Posterior vena cava (tissue), 2 donors: ENCODE measurements at regions of chr9 and their contacts with region 1.

Region 1: DNA sequence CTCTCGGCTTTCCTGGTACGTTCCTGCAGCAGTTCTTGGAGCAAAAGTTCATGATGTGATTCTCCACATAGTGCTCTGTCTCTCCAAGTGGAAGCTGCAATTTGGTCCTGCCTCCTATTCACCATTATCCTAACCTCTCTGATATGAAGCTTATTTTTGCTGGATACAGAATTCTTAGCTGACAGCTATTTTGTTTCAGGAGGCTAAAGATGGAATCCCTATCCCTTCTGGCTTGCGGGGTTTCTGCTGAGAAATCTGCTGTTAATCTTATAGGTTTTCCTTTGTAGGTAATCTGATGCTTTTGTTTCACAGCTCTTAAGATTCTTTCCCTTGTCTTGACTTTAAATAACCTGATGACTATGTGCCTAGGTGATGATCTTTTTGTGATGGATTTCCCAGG is 181.6 kb upstream of the VLDLR start:
- DNase-seq: no peak

Region 2: GRCh38 chr9:2241836-2242741 is 197.9 kb before region 1 on chr9:
- intact Hi-C with region 1: loop called in 1 of 2 experiments (anchors 10 kb)
- DNase-seq: peak; percentile 93

Region 3: GRCh38 chr9:2403701-2404100 is 36.3 kb before region 1 on chr9:
- intact Hi-C with region 1: no loop called
- DNase-seq: no peak

Region 4: DNA sequence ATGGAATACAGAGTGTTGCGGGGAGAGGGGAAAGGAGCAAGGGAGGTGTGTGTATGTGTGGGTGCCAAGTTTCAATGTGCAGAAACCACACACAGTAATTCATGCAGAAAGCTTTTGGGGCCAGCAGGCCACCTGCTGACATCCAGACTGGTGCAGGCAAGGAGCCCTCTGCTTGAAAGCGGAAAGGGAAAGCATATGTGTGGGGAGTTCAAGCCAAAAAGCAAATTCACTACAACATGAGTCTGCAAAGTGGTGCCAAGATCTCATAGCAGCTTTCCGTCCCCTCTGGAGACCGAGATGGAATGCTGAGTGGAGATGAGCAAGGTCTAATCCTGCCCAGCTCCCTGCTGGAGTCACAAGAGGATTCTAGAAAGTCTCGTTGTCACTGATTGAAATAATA is 21.9 kb after region 1 on chr9:
- intact Hi-C with region 1: no loop called
- DNase-seq: no peak